ENCODE measurements at regions of chr20 and their contacts with region 1.

Region 1: GRCh38 chr20:44388466-44389023 is 33.0 kb downstream of the HNF4A start:
- DNase-seq: peak; percentile 80 to 88 (median 85)
- ATAC-seq: peak; percentile 77
- H3K4me3 ChIP-seq: no peak overlapping the region
- H3K4me1 ChIP-seq: peaks cover 32% of the 10 kb centered on the region
- CTCF ChIP-seq: peak; percentile 51

Region 2: DNA sequence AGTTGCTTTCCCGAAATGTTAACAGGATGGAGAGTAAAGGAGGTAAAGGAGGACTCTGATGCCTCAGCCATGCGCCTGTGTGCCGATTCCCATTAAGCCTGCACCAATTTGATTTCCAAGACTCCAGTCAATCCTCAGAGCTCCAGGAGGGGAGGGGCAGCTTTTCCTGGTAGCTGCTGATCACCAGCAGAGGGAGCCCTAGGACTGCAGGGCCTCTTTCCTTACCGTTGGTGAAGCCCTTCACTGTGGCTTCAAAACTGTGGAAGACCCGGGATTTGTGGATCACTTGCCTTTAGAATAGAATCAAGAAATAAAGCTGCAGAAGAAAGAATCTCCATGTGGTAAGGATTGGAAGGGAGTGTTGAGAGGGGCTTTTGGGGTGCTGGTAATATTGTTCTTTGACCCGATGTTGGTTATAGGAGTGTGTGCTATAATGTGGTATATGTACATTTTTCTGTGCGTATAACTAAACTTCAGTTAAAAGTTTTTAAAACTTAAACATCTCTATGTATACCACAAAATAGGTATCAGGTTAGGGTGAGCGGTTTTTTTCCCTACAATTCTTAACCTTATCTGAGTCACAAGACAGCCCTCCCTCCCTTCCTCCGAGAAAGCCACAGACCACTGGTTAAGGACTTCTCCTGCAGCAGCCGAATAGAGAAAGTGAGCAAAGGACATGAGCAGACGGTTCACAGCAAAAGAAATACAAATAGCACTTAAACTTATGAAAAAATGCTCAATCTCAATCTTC is 171.0 kb before region 1 on chr20:
- intact Hi-C with region 1: loop called in 1 of 2 experiments (anchors 2 kb)
- DNase-seq: peak in 2 of 3 donors; percentile 80 to 92
- ATAC-seq: peak; percentile 88
- H3K4me3 ChIP-seq: no peak overlapping the region
- H3K4me1 ChIP-seq: peaks cover 15% of the 10 kb centered on the region
- CTCF ChIP-seq: peak; percentile 81

Region 3: DNA sequence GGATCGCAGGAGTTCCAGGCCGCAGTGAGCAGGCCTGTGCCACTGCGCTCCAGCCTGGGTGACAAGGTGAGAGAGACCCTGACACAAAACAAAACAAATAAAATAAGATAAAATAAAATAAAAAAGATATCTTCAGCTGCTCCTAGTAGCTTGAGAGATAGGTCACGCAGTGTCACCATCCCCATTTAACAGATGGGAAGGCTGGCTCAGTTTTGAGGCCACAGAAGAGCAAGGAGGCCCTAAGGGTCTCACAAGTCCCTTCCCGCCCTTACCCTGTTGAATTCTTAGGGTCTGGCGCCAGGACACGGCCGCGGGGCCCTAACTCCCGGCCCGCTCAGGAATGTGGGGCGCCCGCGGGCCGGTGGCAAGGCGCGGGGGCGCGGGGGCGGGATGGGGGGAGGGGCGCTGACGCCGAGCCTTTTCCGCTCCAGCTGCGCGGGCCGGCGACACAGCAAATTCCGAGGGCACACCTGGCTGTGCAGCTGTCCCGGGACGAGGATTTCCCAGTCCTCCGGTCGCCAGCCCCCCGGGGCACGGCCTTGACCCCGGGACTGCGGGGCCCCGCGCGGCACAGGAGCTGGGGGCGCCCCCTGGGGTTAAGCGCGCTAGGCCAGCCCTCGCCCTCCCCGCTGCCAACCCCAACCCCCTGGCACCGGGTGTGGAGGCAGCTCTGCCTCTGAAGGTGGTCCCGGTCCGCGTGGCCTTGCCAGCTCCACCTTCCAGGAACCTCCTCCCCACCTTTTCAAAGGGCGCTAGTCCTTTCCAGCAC is 62.0 kb before region 1 on chr20:
- intact Hi-C with region 1: no loop called
- DNase-seq: no peak
- ATAC-seq: peak; percentile 17
- H3K4me3 ChIP-seq: no peak overlapping the region
- H3K4me1 ChIP-seq: peaks cover 8% of the 10 kb centered on the region
- CTCF ChIP-seq: no peak

Region 4: DNA sequence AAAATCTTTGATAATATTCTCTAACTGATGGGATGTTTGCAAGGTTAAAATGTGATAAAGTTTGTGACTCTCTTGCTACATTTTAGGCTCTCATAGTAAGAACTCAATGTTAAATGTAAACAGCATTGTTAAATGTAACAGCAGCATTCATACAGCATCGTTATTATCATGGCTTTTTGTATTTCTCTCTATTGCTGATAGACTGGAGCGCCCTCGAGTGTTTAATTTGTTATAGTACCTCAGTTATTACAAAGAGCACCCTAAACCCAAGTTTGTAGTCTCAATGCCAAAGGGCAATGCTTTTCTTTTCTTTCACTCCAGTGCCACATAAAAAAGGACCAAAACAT is 72.2 kb after region 1 on chr20:
- intact Hi-C with region 1: loop called in 1 of 2 experiments (anchors 10 kb)
- DNase-seq: peak in 1 of 3 donors; percentile 73
- ATAC-seq: peak; percentile 77
- H3K4me3 ChIP-seq: no peak overlapping the region
- H3K4me1 ChIP-seq: peaks cover 6% of the 10 kb centered on the region
- CTCF ChIP-seq: no peak

Measured in mucosa of descending colon (tissue), 3 donors.